GM13977 (cell line): ENCODE measurements at regions of chr15 and their contacts with region 1.

Region 1: DNA sequence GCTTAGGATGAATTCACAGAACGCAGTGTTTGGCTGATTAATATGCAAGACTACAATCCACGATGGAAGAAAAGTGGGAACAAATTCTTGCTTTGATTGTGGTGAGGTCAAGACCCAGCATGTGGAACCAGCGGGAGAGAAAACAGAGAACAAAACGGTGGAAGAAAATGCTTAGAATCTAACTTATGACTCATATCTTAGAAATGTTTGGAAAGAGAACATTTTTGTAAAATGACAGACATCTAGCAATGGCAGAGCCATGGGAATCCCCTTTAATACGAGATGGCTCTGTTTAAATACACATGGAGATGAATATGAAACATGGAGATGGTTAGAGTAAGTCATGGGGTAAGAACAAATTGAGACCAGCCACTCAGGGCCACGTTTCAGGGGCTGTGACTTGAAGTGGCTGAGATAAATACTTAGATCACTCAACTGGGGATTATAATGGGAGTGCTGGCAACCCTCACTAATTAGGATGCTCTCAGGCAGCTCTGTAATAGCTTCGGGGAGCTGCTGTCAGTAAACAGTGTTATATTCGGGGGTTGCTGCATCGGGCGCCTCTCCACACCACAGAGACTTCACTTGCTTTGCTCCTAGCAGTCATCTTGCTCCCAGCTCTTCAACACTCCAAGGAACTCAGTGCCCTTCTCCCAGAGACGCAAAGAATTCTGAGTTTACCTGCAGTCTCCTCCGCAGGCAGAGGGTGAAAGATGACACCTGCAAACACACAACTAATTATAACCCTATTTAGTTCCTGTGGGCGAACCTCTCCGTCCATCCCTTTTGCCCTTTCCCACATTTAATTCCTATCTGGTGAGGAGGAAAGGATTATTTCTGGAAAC is 68.0 kb upstream of the ONECUT1 start:
- DNase-seq: no peak
- CTCF ChIP-seq: no peak

Region 2: DNA sequence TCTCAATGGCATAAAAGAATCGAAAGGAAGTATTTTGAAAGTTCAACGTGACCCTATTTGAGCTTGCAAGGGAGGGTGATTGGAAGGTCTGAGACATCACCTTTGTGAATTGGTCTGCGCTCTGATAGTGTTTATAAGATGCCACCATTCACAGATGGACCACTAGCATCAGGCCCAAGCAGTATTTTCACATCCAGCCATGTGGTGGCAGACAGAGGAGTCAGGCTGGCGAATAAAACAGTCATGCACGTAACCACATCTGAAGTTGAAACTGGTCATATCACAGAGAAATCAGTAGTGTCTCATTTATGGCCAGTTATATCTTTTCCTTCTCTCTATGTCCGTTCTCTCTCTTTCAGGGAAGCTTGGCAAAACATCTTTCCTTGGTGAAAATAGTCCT is 102.1 kb after region 1 on chr15:
- in situ Hi-C with region 1: loop called (anchors 25 kb)
- DNase-seq: no peak
- CTCF ChIP-seq: no peak

Region 3: DNA sequence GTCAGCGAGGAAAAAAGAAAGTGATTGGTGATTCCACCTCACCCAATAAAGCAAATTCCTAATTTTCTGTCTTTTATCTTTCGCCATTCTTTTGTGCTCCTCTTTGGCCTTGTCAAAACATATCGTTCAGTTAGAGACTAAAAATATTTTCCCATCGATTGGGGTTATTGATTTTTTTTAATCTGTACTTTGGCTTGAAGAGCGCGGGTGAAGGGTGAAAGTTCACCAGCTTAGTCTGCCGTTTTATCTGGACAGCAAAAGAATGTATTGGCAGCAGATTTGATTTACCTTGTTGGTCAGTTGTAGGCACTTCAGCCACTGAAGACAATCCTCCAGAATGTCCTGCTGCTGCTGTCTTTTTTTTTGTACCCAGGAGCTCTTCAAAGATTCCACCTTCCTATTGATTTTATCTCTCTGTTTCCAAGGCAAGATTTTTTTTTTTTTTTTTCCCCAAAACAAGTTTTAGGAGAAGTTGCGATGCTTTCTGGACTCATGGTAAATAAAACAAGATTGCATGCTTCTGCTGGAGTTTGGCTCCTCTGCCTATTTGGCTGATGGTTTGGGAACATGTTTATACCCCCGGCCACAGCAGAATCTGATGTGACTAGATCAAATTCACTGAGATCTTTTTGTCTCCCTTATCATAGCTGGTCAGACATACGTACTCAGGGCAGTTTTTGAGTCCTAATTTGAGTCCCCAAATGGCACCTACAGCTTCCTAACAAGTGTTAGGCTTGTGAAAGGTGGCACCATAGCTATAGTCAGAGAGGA is 201.3 kb after region 1 on chr15:
- in situ Hi-C with region 1: no loop called
- DNase-seq: no peak
- CTCF ChIP-seq: no peak